Mammary epithelial cell (primary cell): ENCODE measurements at regions of chr2 and their contacts with region 1.

Region 1: DNA sequence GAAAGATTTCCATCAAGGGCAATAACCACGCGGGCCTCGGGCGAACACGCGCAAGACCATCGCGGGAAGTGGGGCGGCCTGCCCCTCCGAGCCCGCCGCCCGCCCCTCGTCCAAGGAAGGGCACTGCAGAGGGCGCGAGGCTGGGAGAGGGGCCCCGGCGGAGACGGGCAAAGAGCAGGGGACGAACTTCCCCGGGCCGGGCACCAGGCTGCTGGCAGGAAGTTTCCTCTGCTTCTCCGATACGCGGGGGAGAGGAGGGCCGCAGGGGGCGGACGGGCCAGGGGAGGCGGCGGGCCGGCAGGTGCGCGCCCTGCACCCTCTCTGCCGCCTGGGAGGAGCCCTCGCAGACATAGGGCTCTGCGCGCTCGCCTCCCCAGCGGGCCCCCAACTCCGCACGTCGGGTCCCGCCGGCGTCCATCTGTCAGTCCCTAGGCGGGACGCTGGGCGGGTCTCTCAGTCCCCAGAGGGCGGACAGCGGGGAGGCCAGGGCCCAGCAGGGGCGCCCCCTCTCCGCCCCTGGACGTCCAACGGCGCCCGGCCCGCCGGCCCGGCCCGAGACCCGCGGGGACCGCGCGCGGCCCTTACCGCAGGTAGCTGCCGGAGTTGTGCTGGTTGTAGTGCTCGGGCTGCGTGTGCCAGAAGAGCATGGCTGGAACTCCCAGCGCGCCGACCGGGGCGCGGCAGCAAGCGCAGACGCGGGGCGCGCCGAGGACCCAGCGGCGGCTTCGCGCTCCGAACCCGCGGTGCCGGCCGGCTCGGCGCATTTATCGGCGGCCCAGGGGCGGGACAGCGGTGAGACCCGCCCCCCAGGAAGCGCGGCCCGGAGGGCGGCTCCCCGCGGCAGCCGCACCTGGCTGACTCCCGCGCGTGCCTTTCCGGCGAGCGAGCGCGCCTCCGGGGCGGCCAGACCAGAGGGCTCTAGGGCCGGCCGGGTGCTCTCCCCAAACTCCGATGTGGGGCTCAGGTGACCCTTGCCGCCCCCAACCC is at the start of gene TFCP2L1:
- DNase-seq: peak; percentile 74
- H3K4me3 ChIP-seq: peak within 1 kb of the TSS; percentile 63 to 74 (median 73)
- H3K27ac ChIP-seq: peak within 1 kb of the TSS; percentile 56
- H3K4me1 ChIP-seq: peaks cover 20% of the 10 kb centered on the region
- H3K27me3 ChIP-seq: no peaks in the 10 kb centered on the region
- CTCF ChIP-seq: no peak
- total RNA-seq, gene TFCP2L1: 50.5 to 174 TPM

Region 2: DNA sequence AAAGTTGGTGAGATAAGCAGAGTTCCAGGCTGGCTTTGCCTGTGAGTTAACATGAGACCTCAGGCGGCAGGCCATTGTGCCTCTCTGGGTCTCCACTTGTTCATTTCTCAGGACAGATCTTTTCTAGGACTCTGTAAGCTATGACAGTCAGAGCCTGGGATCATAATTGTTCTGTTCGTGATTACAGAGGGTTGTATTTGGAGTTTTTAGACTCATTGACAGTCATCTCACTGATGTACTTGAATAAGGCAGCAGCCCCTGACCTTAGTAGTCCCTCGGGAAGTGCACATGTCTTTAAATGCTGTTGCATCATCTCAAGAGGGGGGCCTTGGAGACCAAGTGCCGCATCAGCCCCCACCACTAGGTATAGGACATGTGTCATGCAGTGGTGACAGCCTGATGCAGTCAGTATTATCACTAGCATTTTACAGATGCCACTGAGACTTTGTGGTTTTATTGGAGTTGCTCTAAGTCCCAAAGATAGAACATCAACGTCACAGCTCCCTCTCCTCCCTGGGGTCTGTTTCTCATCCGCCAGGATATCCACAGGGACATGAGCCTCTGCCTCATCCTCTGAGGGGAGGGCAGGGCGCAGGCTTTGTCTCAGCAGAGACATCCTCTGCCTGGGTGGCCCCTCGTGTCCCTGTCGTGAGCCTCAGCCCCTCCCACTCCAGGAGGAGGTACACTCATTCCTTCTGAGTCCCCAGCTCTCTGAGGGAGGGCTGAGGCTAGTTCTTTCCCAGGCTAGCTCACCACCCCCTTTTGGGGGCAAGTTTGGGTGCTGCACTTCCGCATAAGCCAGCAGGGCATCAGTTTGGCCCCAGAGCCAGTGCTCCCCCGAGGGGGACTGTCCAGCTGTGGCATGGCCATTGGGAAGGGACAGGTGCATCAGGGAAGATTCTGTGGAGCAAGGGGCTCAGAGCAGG is 535.0 kb before region 1 on chr2:
- CTCF ChIA-PET with region 1: no interaction called
- dilution Hi-C with region 1: no loop called
- in situ Hi-C with region 1: no loop called
- intact Hi-C with region 1: no loop called
- DNase-seq: no peak
- H3K4me3 ChIP-seq: no peak overlapping the region
- H3K27ac ChIP-seq: no peak overlapping the region
- H3K4me1 ChIP-seq: no peaks in the 10 kb centered on the region
- H3K27me3 ChIP-seq: no peaks in the 10 kb centered on the region
- CTCF ChIP-seq: no peak

Region 3: GRCh38 chr2:121220995-121221394 is 63.8 kb before region 1 on chr2:
- CTCF ChIA-PET with region 1: no interaction called
- dilution Hi-C with region 1: loop called (anchors 5 kb)
- in situ Hi-C with region 1: no loop called
- intact Hi-C with region 1: no loop called
- DNase-seq: peak; percentile 70
- H3K4me3 ChIP-seq: no peak overlapping the region
- H3K27ac ChIP-seq: peak overlapping the region; percentile 13
- H3K4me1 ChIP-seq: no peaks in the 10 kb centered on the region
- H3K27me3 ChIP-seq: no peaks in the 10 kb centered on the region
- CTCF ChIP-seq: no peak

Region 4: DNA sequence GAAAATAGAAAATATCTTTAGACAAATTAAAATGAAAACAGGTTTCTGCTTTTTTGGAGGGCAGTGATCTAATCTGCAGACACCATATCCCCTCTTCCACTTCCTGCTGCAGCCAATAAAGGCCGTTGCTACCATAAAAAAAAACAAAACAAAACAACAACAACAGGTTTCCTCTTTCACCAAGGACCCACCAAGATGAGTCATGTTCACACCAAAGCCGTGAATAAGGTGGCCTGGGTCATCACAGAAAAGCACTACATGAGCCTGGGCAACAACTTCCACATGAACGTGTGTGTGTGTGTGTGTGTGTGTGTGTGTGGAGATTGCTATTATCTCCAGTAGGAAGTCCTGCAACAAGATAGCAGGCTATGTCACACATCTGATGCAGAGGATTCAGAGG is 25.0 kb after region 1 on chr2:
- CTCF ChIA-PET with region 1: no interaction called
- dilution Hi-C with region 1: no loop called
- in situ Hi-C with region 1: no loop called
- intact Hi-C with region 1: no loop called
- DNase-seq: no peak
- H3K4me3 ChIP-seq: no peak overlapping the region
- H3K27ac ChIP-seq: no peak overlapping the region
- H3K4me1 ChIP-seq: no peaks in the 10 kb centered on the region
- H3K27me3 ChIP-seq: no peaks in the 10 kb centered on the region
- CTCF ChIP-seq: no peak